OCI-LY7 (cell line): ENCODE measurements at regions of chr2 and their contacts with region 1.

Region 1: GRCh38 chr2:224952936-224953657 is 89.2 kb downstream of the DOCK10 start:
- DNase-seq: peak; percentile 91
- H3K4me3 ChIP-seq: peak overlapping the region; percentile 31
- H3K27ac ChIP-seq: peak overlapping the region; percentile 69
- H3K4me1 ChIP-seq: peaks cover 87% of the 10 kb centered on the region
- CTCF ChIP-seq: no peak

Region 2: DNA sequence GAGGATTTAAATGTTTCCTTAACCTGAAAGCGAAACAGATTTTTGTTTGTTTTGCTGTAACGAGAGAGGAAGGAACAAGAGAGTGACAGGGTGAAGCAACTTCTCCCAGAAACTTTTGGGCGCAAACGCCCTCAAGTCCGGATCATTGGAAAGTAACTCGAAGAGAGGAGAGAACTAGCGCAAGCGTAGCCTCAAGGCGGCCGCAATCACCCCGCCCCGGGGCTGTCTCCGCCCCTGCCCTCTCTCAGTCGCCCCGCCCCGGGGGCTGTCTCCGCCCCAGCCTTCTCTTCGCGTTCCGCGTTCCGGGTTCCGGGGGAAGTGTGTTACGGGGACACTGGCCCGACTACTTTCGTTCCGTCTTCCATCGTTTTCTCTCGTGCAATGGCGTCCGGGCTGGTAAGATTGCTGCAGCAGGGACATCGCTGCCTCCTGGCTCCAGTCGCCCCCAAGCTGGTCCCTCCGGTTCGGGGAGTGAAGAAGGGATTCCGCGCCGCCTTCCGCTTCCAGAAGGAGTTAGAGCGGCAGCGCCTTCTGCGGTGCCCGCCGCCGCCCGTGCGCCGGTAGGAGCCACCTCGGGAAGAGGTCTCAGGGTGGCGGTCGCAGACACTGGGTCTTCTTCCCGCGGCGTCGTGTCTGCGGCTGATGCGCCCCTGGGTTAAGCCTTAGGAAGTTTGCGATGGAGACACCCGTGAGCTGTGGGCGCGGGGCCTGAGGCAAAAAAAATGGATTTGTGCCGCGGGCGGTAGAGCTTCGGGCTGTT is 995.8 kb before region 1 on chr2 and contains the start of gene MRPL44:
- CTCF ChIA-PET with region 1: no interaction called
- POLR2A ChIA-PET with region 1: no interaction called
- intact Hi-C with region 1: loop called (anchors 10 kb)
- DNase-seq: peak; percentile 96
- H3K4me3 ChIP-seq: peak within 1 kb of the TSS; percentile 91
- H3K27ac ChIP-seq: peak within 1 kb of the TSS; percentile 29
- H3K4me1 ChIP-seq: peaks cover 82% of the 10 kb centered on the region
- CTCF ChIP-seq: no peak
- total RNA-seq, gene MRPL44: 25.4 and 36.2 TPM in 2 replicates

Region 3: DNA sequence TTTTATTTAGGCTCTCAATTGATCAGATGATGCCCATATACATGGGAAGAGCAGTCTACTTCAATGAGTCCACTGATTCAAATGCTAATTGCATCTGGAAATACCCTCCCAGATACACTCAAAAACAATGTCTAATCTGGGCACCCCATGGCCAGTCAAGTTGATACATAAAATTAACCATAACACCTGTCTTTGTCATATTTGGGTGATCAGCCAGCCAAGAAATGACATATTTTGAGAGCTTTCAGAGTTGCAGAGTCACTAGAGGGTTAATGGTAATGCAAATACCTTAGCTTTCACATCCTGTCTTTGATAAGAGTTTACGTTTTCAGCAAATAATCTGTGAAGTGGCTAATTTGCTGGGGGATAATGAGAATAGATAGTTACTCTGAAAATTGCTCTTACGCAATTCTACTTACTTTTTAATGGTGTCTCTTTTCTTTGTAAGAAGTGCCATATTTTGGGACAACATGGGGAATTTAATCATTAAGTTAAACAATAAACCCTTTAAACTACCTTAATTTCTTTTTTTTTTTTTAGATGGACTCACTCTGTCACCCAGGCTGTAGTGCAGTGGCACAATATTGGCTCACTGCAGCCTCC is 286.0 kb before region 1 on chr2:
- CTCF ChIA-PET with region 1: no interaction called
- POLR2A ChIA-PET with region 1: interaction called, 3 read pairs
- intact Hi-C with region 1: loop called (anchors 10 kb)
- DNase-seq: peak; percentile 95
- H3K4me3 ChIP-seq: peak overlapping the region; percentile 53
- H3K27ac ChIP-seq: peak overlapping the region; percentile 98
- H3K4me1 ChIP-seq: peaks cover 53% of the 10 kb centered on the region
- CTCF ChIP-seq: no peak

Region 4: GRCh38 chr2:224847961-224848850 is 104.9 kb before region 1 on chr2:
- CTCF ChIA-PET with region 1: no interaction called
- POLR2A ChIA-PET with region 1: no interaction called
- intact Hi-C with region 1: no loop called
- DNase-seq: no peak
- H3K4me3 ChIP-seq: no peak overlapping the region
- H3K27ac ChIP-seq: no peak overlapping the region
- H3K4me1 ChIP-seq: no peaks in the 10 kb centered on the region
- CTCF ChIP-seq: no peak

Region 5: GRCh38 chr2:224973112-224974016 is 20.3 kb after region 1 on chr2:
- CTCF ChIA-PET with region 1: no interaction called
- POLR2A ChIA-PET with region 1: interaction called, 14 read pairs
- intact Hi-C with region 1: no loop called
- DNase-seq: no peak
- H3K4me3 ChIP-seq: peak overlapping the region; percentile 5
- H3K27ac ChIP-seq: no peak overlapping the region
- H3K4me1 ChIP-seq: peaks cover 50% of the 10 kb centered on the region
- CTCF ChIP-seq: no peak

Region 6: DNA sequence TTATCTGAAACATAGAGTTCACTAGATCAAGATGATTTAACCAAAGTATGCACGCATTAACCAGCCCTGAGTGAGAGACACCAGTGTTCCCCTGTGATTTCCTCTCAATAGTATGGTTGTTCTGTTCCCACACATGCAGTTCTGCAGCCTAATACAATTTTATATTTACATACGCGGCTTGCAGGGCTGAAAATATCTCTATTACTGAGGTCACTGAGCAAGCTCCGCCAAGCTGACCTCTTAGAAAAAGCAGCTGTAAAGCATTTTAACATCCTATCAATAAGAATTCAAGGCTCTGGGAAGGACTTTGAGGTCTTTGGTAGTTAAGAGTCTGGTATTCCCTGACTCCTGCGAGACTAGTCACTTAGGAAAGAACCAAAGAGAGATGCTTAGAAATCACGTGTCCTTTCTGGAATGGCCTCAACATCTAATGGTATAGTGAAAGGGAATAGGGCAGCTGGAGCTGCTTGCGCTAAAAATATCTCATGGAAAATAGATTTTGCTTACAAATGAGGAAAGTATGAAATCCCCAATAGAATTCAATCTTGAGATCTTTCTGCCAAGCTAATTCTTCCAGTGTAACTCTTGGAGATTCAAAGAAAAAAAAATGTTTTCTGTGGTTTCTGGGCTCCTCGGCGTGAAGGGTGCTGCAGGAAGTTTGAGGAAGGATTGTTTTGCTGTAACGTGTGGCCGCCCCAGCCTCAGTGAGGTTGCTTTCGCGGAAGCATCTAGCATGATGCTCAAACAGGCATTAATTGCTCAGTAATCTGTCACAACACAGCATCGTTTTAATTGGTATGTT is 30.0 kb after region 1 on chr2:
- CTCF ChIA-PET with region 1: no interaction called
- POLR2A ChIA-PET with region 1: interaction called, 10 read pairs
- intact Hi-C with region 1: no loop called
- DNase-seq: no peak
- H3K4me3 ChIP-seq: no peak overlapping the region
- H3K27ac ChIP-seq: no peak overlapping the region
- H3K4me1 ChIP-seq: peaks cover 19% of the 10 kb centered on the region
- CTCF ChIP-seq: no peak